ENCODE measurements at regions of chr6 and their contacts with region 1.

Region 1: GRCh38 chr6:6676910-6677441 is 88.5 kb downstream of the LY86 start:
- DNase-seq: peak; percentile 69
- ATAC-seq: peak; percentile 98
- H3K4me3 ChIP-seq: no peak overlapping the region
- H3K27ac ChIP-seq: no peak overlapping the region
- H3K4me1 ChIP-seq: peaks cover 2% of the 10 kb centered on the region; the same call in 1 of the 2 replicates
- H3K27me3 ChIP-seq: no peaks in the 10 kb centered on the region; the same call in 1 of the 2 replicates
- CTCF ChIP-seq: peak; percentile 90
- POLR2A ChIP-seq: no peak
- RAD21 ChIP-seq: peak; percentile 88

Region 2: GRCh38 chr6:7261032-7261841 is 584.3 kb after region 1 on chr6:
- CTCF ChIA-PET with region 1: no interaction called
- POLR2A ChIA-PET with region 1: no interaction called
- dilution Hi-C with region 1: no loop called
- in situ Hi-C with region 1: no loop called
- intact Hi-C with region 1: loop called (anchors 5 kb)
- DNase-seq: peak; percentile 80
- ATAC-seq: peak; percentile 100
- H3K4me3 ChIP-seq: peak overlapping the region; percentile 75
- H3K27ac ChIP-seq: peak overlapping the region; percentile 76
- H3K4me1 ChIP-seq: peaks cover 3% of the 10 kb centered on the region
- H3K27me3 ChIP-seq: no peaks in the 10 kb centered on the region
- CTCF ChIP-seq: no peak
- POLR2A ChIP-seq: peak; percentile 61; the same call in 1 of the 2 replicates
- RAD21 ChIP-seq: no peak